ENCODE measurements at regions of chr11 and their contacts with region 1.

Region 1: DNA sequence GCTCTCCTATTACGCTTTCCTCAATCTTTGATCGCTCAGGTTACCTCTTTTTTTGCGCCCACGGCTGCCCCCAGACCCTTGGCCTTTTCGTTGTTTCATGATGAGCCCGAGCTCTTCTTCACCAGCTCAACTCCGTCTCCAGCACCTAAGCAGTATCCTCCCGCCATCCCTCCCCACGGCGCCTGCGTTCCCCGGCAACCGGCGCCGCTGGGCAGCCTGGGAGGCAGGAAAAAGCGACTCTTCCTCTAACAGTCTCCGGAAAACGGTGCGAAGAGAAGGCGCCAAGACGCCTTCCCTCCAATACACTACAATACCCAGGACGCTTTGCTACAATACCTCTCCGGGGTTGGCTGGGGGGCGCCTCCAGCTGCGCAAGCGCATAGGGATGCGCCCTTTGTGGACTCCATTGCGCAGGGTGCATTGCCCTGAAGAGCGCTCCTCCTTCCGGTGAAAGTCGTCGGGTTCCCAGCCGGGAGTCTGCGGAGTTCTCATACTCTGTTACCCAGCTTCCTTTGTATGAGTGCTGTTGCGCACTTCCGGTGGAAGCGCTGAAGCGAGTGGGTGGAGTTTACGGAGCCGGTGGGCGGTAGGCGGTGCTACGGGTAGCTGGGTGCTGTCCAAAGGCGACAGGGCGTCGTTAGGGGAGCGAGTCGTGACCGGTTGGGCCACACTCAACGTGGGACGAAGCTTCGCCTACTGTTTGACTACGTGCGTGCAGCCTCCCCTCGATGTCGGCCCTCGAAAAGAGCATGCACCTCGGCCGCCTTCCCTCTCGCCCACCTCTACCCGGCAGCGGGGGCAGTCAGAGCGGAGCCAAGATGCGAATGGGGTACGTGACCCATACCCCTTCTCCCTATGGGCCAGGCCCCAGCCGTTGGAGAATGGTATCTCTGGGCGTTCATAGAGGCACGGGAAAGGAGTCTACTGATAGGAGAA is at the starts of genes C2CD3 and PPME1:
- DNase-seq: peak; percentile 99
- H3K4me3 Mint-ChIP-seq: no peak within 1 kb of the TSS
- H3K27ac Mint-ChIP-seq: no peak within 1 kb of the TSS
- H3K4me1 Mint-ChIP-seq: peaks cover 17% of the 10 kb centered on the region
- H3K27me3 Mint-ChIP-seq: no peaks in the 10 kb centered on the region
- total RNA-seq, gene C2CD3: 21.3 to 23.1 TPM
- total RNA-seq, gene PPME1: 19.0 to 22.1 TPM

Region 2: DNA sequence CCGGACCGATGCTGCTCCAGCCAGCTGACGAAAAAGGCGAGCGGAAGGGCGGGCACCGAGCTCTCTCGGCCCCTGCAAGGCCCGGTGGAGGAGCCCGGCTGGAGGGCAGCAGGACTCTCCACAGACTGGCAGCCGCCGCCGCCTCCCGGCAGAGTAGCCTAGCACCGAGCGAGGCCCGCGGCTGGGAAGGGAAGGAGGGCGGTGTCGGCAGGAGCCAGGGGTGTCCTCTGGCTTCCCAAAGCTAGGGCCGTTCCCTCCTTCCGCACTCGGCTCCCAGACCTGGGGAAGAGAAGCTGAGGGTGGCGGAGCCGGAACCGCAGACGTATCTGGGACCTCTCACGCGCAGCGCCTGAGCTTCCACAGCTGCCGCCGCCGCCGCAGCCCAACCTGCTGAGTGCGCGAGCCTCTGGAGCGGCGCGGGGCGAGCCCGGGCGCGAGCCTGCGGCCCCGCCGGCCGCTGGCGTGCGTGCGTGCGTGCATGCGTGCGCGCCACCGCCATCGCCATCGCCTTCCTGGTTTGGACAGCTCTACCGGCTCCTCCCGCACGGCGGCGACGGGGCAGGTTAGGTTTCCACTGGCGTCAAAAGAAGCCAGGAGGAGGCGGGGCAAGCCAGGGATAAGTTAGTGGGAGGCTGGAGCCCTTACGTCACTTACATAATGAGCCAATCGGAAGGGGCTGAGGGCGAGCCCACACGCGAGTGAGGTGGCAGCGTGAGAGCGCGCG is 410.1 kb before region 1 on chr11 and contains the start of gene RAB6A:
- CTCF ChIA-PET with region 1: no interaction called
- intact Hi-C with region 1: loop called (anchors 1 kb)
- DNase-seq: peak; percentile 100
- H3K4me3 Mint-ChIP-seq: peak within 1 kb of the TSS; percentile 88
- H3K27ac Mint-ChIP-seq: peak within 1 kb of the TSS; percentile 90
- H3K4me1 Mint-ChIP-seq: peaks cover 34% of the 10 kb centered on the region
- H3K27me3 Mint-ChIP-seq: no peaks in the 10 kb centered on the region
- total RNA-seq, gene RAB6A: 36.7 to 41.2 TPM

Region 3: DNA sequence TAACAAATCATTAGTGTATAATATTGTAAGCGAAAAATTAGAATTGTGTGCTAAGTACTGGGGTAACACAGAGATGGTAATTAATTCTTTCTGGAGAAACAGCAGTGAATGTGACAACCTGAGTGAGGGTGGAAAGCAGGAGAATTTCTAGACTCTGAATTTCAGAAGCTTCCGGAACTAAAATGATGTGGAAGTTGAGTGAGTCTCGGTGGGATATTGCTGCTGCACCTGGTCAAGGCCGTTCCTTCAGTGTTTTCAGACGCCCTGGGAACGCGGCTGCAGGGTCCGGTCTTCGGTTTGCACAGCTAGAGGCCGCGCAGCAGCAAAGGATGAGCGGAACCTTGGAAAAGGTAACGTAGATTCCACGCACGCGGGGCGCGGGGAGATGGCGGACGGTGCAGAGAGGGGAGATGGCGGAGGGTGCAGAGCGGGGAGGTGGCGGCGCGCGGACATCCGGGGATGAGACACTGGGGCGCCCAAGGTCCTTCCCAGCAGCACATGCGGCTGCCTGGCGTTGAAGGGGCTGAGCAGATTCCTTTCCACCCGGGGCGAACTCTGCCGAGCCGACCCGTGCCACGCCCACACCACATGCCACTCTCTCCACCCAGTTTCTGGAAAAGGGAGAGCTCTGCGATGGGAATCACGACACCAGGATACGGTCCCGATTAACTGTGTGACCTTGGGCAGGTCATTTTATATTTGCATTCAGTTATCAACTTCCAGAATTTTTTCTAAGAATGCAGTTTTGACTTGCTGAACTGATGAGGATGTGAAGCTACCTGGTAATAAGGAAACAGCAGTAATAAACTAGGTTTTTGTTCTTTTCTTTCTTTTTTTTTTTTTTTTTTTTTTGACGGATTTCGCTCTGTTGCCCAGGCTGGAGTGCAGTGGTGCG is 383.1 kb before region 1 on chr11 and contains the start of gene MRPL48:
- CTCF ChIA-PET with region 1: no interaction called
- intact Hi-C with region 1: loop called (anchors 1 kb)
- DNase-seq: peak; percentile 94
- H3K4me3 Mint-ChIP-seq: peak within 1 kb of the TSS; percentile 97
- H3K27ac Mint-ChIP-seq: peak within 1 kb of the TSS; percentile 98
- H3K4me1 Mint-ChIP-seq: peaks cover 13% of the 10 kb centered on the region
- H3K27me3 Mint-ChIP-seq: no peaks in the 10 kb centered on the region
- total RNA-seq, gene MRPL48: 49.2 to 53.5 TPM

Region 4: GRCh38 chr11:73965076-73965860 is 205.7 kb before region 1 on chr11:
- CTCF ChIA-PET with region 1: interaction called, 3 read pairs
- intact Hi-C with region 1: loop called (anchors 1 kb)
- DNase-seq: no peak
- H3K4me3 Mint-ChIP-seq: no peak overlapping the region
- H3K27ac Mint-ChIP-seq: no peak overlapping the region
- H3K4me1 Mint-ChIP-seq: peaks cover 44% of the 10 kb centered on the region
- H3K27me3 Mint-ChIP-seq: no peaks in the 10 kb centered on the region

Region 5: GRCh38 chr11:74232311-74232950 is 61.5 kb after region 1 on chr11:
- CTCF ChIA-PET with region 1: no interaction called
- intact Hi-C with region 1: loop called (anchors 5 kb)
- DNase-seq: peak; percentile 18
- H3K4me3 Mint-ChIP-seq: no peak overlapping the region
- H3K27ac Mint-ChIP-seq: peak overlapping the region; percentile 67
- H3K4me1 Mint-ChIP-seq: peaks cover 23% of the 10 kb centered on the region
- H3K27me3 Mint-ChIP-seq: no peaks in the 10 kb centered on the region

Region 6: DNA sequence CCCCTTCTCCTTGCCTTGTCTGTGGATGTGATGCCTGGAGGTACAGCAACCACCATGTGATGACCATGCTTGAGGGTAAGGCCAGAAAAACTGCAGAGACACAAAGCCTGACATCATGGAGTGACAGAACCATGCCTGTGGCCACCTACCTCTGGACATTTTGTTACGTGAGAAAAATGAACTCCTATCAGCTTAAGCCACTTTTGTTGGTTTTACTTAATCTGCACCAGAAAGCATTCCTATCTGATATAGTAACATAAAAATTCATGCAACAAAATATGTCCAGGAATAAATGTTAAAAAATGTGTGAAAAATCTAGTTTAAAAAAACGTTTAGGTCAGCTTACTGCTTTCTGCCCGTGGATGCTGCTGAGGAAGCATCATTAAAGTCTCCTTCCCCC is 183.1 kb after region 1 on chr11:
- CTCF ChIA-PET with region 1: no interaction called
- intact Hi-C with region 1: no loop called
- DNase-seq: no peak
- H3K4me3 Mint-ChIP-seq: no peak overlapping the region
- H3K27ac Mint-ChIP-seq: no peak overlapping the region
- H3K4me1 Mint-ChIP-seq: no peaks in the 10 kb centered on the region
- H3K27me3 Mint-ChIP-seq: no peaks in the 10 kb centered on the region